ENCODE measurements at regions of chr11 and their contacts with region 1.

Region 1: GRCh38 chr11:118462178-118462577 is 25.9 kb downstream of the KMT2A start:
- DNase-seq: no peak
- H3K4me3 Mint-ChIP-seq: no peak overlapping the region
- H3K27ac Mint-ChIP-seq: no peak overlapping the region
- H3K4me1 Mint-ChIP-seq: peaks cover 40% of the 10 kb centered on the region
- H3K27me3 Mint-ChIP-seq: no peaks in the 10 kb centered on the region

Region 2: GRCh38 chr11:118353084-118353710 is 109.0 kb before region 1 on chr11:
- CTCF ChIA-PET with region 1: no interaction called
- POLR2A ChIA-PET with region 1: no interaction called
- intact Hi-C with region 1: no loop called
- DNase-seq: no peak
- H3K4me3 Mint-ChIP-seq: no peak overlapping the region
- H3K27ac Mint-ChIP-seq: peak overlapping the region; percentile 71
- H3K4me1 Mint-ChIP-seq: peaks cover 23% of the 10 kb centered on the region
- H3K27me3 Mint-ChIP-seq: no peaks in the 10 kb centered on the region

Region 3: GRCh38 chr11:118476676-118477075 is 14.5 kb after region 1 on chr11:
- CTCF ChIA-PET with region 1: interaction called, 3 read pairs
- POLR2A ChIA-PET with region 1: no interaction called
- intact Hi-C with region 1: loop called (anchors 2 kb)
- DNase-seq: no peak
- H3K4me3 Mint-ChIP-seq: no peak overlapping the region
- H3K27ac Mint-ChIP-seq: peak overlapping the region; percentile 50
- H3K4me1 Mint-ChIP-seq: peaks cover 9% of the 10 kb centered on the region
- H3K27me3 Mint-ChIP-seq: no peaks in the 10 kb centered on the region

Region 4: GRCh38 chr11:118572061-118572980 is 110.1 kb after region 1 on chr11 and contains the start of gene ARCN1:
- CTCF ChIA-PET with region 1: no interaction called
- POLR2A ChIA-PET with region 1: no interaction called
- intact Hi-C with region 1: no loop called
- DNase-seq: peak; percentile 87
- H3K4me3 Mint-ChIP-seq: peak within 1 kb of the TSS; percentile 87
- H3K27ac Mint-ChIP-seq: peak within 1 kb of the TSS; percentile 92
- H3K4me1 Mint-ChIP-seq: peaks cover 52% of the 10 kb centered on the region
- H3K27me3 Mint-ChIP-seq: no peaks in the 10 kb centered on the region
- total RNA-seq, gene ARCN1: 180 to 182 TPM

Measured in activated CD4-positive, alpha-beta memory T cell treated with anti-CD3 and anti-CD28 coated beads for 36 hours (primary cell).